Heart left ventricle (tissue), 16 donors: ENCODE measurements at regions of chr1 and their contacts with region 1.

Region 1: GRCh38 chr1:220776720-220777326 is 9.9 kb upstream of the MTARC1 start:
- DNase-seq: peak; percentile 78 to 88 (median 80)
- ATAC-seq: peak; percentile 87 to 97 (median 94)
- H3K4me3 ChIP-seq: no peak overlapping the region
- H3K27ac ChIP-seq: no peak overlapping the region
- H3K4me1 ChIP-seq: peaks cover 0 to 9% (median 0%) of the 10 kb centered on the region in 12 donors
- H3K27me3 ChIP-seq: no peaks in the 10 kb centered on the region
- CTCF ChIP-seq: peak; percentile 76 to 97 (median 94)
- POLR2A ChIP-seq: no peak

Region 2: GRCh38 chr1:219990782-219991510 is 785.9 kb before region 1 on chr1:
- intact Hi-C with region 1: loop called in 1 of 10 experiments (anchors 10 kb)
- DNase-seq: no peak
- ATAC-seq: no peak
- H3K4me3 ChIP-seq: no peak overlapping the region
- H3K27ac ChIP-seq: no peak overlapping the region
- H3K4me1 ChIP-seq: no peaks in the 10 kb centered on the region
- H3K27me3 ChIP-seq: no peaks in the 10 kb centered on the region
- CTCF ChIP-seq: peak; percentile 39 to 74 (median 54)
- POLR2A ChIP-seq: no peak

Region 3: GRCh38 chr1:220189750-220190347 is 587.0 kb before region 1 on chr1:
- intact Hi-C with region 1: loop called in 1 of 10 experiments (anchors 10 kb)
- DNase-seq: no peak
- ATAC-seq: no peak
- H3K4me3 ChIP-seq: no peak overlapping the region
- H3K27ac ChIP-seq: no peak overlapping the region
- H3K4me1 ChIP-seq: no peaks in the 10 kb centered on the region
- H3K27me3 ChIP-seq: no peaks in the 10 kb centered on the region
- CTCF ChIP-seq: peak; percentile 23 to 65 (median 44)
- POLR2A ChIP-seq: no peak

Region 4: GRCh38 chr1:220281159-220281574 is 495.7 kb before region 1 on chr1:
- intact Hi-C with region 1: loop called in 1 of 10 experiments (anchors 10 kb)
- DNase-seq: no peak
- ATAC-seq: no peak
- H3K4me3 ChIP-seq: no peak overlapping the region
- H3K27ac ChIP-seq: no peak overlapping the region
- H3K4me1 ChIP-seq: no peaks in the 10 kb centered on the region
- H3K27me3 ChIP-seq: peaks cover 0 to 23% (median 0%) of the 10 kb centered on the region in 9 donors
- CTCF ChIP-seq: peak in 10 of 12 donors; percentile 18 to 50 (median 34)
- POLR2A ChIP-seq: no peak

Region 5: DNA sequence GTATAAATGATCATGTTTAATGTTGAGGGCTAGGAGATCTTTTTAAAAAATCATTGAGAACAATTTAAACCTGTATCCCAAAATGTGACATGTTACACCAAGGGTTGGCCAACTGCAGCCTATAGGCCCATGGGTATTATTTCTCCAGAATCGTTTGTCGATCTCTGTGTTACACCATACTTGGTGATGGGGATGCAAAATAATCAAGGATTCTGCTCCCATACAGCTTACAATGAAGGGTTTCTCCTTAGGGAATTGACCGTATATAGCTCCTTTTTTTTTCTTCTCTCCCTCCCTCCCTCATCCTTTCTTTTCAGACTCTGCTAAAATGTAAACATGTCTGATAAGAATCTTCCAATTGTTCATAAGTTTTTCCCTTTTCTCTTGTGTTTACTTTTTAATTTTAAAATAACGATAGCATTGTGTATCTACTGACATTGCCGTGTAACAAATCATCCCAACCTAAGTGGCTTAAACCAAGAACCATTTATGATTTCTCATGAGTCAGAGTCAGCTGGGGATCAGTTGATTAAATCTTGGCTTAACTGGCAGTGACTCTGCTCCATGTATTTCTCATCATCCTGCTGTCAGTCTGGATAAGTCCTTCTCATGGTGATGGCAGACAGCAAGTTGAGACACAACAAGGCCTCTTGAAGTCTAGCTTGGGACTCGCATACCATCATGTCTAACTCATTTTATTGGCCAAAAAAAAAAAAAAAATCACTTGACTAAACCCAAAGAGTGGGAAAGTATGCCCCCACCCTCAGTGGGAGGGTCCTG is 200.9 kb before region 1 on chr1:
- intact Hi-C with region 1: no loop called
- DNase-seq: no peak
- ATAC-seq: no peak
- H3K4me3 ChIP-seq: no peak overlapping the region
- H3K27ac ChIP-seq: no peak overlapping the region
- H3K4me1 ChIP-seq: no peaks in the 10 kb centered on the region
- H3K27me3 ChIP-seq: no peaks in the 10 kb centered on the region
- CTCF ChIP-seq: no peak
- POLR2A ChIP-seq: no peak

Region 6: DNA sequence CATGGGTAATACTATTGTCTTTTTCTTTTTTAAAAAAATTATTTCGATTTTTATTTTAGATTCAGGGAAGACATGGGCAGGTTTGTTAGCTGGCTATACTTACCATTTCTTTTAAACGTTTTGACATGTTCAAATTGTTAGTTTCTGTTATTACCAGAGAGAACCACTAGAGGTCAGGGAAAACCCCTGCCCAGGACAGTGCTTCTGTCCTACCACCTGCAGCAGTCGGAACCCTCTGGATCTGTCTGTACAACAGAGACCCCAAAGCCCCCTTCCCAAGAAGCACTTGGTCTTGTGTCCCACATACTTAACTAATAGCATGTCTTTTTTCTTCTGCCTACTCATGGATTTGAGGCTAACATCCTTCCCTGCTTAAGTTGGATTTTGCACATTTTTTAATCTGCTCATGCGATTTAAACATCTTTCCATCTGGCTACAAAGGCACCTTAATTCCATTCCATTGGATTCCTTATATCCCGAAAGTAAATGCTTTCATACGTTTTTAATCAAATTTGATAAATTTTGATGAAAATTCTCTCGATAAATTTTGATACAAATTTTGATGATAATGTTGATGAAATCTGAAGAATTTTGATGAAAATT is 96.6 kb before region 1 on chr1:
- intact Hi-C with region 1: loop called (anchors 1 to 5 kb)
- DNase-seq: no peak
- ATAC-seq: peak in 3 of 4 donors; percentile 66 to 78 (median 74)
- H3K4me3 ChIP-seq: no peak overlapping the region
- H3K27ac ChIP-seq: no peak overlapping the region
- H3K4me1 ChIP-seq: peaks cover 0 to 3% (median 0%) of the 10 kb centered on the region in 12 donors
- H3K27me3 ChIP-seq: no peaks in the 10 kb centered on the region
- CTCF ChIP-seq: peak; percentile 68 to 83 (median 80)
- POLR2A ChIP-seq: no peak

Region 7: DNA sequence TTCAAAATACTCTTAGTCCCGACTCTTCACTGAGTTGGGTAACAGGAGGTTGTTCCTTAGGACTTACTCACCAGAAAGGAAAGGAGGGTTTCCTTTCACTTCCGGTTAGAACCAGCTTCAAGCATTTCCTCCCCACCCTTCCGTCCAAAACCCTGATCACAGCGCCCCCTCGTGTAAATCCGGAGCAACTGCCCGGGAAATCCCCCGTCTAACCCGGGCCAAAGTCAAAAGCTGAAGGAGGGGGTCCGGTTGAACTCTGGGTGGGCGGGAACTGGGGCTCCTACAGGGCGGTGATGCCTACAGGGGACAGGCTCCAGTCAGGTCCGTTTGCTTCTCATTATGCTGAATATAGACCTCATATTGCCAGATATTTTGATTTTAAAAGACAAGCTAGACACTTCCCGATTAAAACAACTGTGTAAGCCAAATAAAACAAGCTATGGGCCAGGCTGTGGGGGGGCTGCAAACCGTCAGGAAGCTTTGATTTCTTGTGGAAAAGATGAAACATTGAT is 43.7 kb before region 1 on chr1:
- intact Hi-C with region 1: loop called in 2 of 10 experiments (anchors 5 kb)
- DNase-seq: peak; percentile 73 to 86 (median 82)
- ATAC-seq: peak; percentile 92 to 96 (median 96)
- H3K4me3 ChIP-seq: peak overlapping the region in 10 of 12 donors; percentile 10 to 50 (median 38)
- H3K27ac ChIP-seq: peak overlapping the region; percentile 54 to 89 (median 79)
- H3K4me1 ChIP-seq: peaks cover 0 to 21% (median 5%) of the 10 kb centered on the region in 12 donors
- H3K27me3 ChIP-seq: no peaks in the 10 kb centered on the region
- CTCF ChIP-seq: peak; percentile 68 to 95 (median 88)
- POLR2A ChIP-seq: no peak

Region 8: GRCh38 chr1:220815409-220815808 is 38.6 kb after region 1 on chr1:
- intact Hi-C with region 1: no loop called
- DNase-seq: no peak
- ATAC-seq: no peak
- H3K4me3 ChIP-seq: no peak overlapping the region
- H3K27ac ChIP-seq: peak overlapping the region in 1 of 12 donors; percentile 12
- H3K4me1 ChIP-seq: peaks cover 0 to 8% (median 4%) of the 10 kb centered on the region in 12 donors
- H3K27me3 ChIP-seq: no peaks in the 10 kb centered on the region
- CTCF ChIP-seq: no peak
- POLR2A ChIP-seq: no peak

Region 9: DNA sequence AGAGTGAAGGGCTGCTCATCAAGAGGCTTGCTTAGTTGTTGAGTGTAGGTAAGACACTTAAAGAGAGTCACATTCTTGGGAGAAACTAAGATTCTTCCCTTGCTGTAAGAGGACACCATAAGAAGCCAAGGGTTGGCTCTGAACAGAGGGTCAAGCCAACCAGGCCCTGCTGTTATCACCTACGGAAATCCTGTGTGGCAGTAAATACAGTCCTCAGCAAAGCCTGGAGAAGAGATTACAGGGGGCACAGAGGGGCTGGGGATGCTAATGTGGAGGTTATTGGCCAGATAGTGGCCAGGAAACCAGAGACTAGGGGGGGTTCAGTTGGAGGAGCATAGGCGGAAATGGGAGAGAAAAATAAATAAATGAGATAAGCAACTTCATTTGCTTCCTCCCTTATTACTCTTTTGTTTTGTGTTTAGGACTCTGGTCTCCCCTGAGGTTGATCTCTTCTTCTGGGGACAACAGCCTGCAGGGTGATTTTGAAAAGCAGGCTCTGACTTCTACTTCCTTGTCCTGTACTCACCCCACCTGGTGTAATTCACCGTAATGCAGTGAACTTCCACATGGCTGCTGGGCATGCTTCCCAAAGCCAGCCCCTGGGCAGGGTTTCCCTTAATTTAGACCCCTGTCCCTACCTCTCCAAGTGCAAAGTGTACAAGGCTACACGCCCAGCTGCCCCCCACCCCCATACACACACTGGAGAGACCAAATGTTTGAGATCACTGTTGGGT is 50.8 kb after region 1 on chr1:
- intact Hi-C with region 1: no loop called
- DNase-seq: no peak
- ATAC-seq: peak in 1 of 4 donors; percentile 36
- H3K4me3 ChIP-seq: no peak overlapping the region
- H3K27ac ChIP-seq: no peak overlapping the region
- H3K4me1 ChIP-seq: peaks cover 0 to 36% (median 12%) of the 10 kb centered on the region in 12 donors
- H3K27me3 ChIP-seq: no peaks in the 10 kb centered on the region
- CTCF ChIP-seq: no peak
- POLR2A ChIP-seq: no peak

Region 10: GRCh38 chr1:221117548-221117951 is 340.7 kb after region 1 on chr1:
- intact Hi-C with region 1: no loop called
- DNase-seq: peak; percentile 25 to 63 (median 55)
- ATAC-seq: peak; percentile 79 to 93 (median 90)
- H3K4me3 ChIP-seq: no peak overlapping the region
- H3K27ac ChIP-seq: peak overlapping the region; percentile 29 to 90 (median 62)
- H3K4me1 ChIP-seq: peaks cover 0 to 28% (median 24%) of the 10 kb centered on the region in 12 donors
- H3K27me3 ChIP-seq: no peaks in the 10 kb centered on the region
- CTCF ChIP-seq: no peak
- POLR2A ChIP-seq: no peak